Activated CD4-positive, alpha-beta memory T cell treated with anti-CD3 and anti-CD28 coated beads, Interleukin-2, amount 10 ng/mL, durations not matched to agents 7 days and 5 days (primary cell): ENCODE measurements at regions of chr15 and their contacts with region 1.

Region 1: DNA sequence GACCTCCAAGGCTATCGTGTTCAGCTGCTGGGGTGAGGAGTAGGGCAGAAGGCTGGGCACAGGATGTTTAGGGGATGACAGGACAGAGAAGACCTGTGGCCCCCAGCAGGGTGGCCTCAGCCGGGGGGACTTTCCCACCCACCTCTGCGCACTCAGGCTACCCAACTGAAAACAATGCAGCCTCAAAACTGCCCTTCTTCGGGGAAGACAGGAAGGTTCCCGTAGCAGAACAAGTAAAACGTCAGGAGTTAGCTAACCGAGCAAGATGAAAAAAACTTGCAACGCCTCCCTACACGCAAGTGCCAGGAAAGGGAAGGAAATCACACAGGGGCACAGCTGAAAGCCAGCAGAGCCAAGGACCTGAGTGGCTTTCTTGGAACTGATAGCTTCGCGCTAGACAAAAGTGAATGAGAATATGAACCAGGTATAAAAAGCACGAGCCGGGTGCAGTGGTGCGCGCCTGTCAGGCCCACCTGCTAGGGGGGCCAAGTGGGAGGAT is 38.4 kb upstream of the FURIN start:
- DNase-seq: peak; percentile 81
- H3K4me3 Mint-ChIP-seq: peak overlapping the region; percentile 58
- H3K27ac Mint-ChIP-seq: peak overlapping the region; percentile 99
- H3K4me1 Mint-ChIP-seq: peaks cover 78% of the 10 kb centered on the region
- H3K27me3 Mint-ChIP-seq: no peaks in the 10 kb centered on the region

Region 2: DNA sequence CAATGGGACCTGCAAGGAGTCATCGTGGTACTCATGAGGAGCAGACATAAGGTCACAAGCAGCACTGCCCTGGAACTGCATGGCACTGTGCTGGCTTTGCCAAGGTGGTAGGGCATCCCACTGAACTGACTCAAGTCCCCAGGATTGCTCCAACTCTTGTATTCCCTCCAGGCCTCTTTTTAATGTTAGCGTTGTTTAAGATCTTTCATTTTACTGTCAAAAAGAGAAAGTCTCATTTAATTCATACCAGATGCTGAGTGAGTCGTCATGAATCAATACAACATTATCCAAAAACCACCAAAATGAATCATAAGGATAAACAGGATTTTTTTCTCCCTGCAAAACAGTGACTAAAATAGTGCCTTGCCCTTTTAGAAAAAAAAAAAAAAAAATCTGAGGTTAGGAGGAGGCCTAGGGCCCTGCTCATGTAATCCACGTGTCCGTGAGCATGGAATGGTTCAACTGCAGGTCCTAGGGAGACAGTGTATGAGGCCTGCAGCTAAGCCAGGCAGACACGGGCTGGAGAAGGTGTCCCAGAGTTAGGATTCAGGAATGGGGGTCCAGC is 149.5 kb before region 1 on chr15:
- CTCF ChIA-PET with region 1: no interaction called
- POLR2A ChIA-PET with region 1: no interaction called
- DNase-seq: no peak
- H3K4me3 Mint-ChIP-seq: no peak overlapping the region
- H3K27ac Mint-ChIP-seq: no peak overlapping the region
- H3K4me1 Mint-ChIP-seq: peaks cover 47% of the 10 kb centered on the region
- H3K27me3 Mint-ChIP-seq: peaks cover under 1% of the 10 kb centered on the region

Region 3: DNA sequence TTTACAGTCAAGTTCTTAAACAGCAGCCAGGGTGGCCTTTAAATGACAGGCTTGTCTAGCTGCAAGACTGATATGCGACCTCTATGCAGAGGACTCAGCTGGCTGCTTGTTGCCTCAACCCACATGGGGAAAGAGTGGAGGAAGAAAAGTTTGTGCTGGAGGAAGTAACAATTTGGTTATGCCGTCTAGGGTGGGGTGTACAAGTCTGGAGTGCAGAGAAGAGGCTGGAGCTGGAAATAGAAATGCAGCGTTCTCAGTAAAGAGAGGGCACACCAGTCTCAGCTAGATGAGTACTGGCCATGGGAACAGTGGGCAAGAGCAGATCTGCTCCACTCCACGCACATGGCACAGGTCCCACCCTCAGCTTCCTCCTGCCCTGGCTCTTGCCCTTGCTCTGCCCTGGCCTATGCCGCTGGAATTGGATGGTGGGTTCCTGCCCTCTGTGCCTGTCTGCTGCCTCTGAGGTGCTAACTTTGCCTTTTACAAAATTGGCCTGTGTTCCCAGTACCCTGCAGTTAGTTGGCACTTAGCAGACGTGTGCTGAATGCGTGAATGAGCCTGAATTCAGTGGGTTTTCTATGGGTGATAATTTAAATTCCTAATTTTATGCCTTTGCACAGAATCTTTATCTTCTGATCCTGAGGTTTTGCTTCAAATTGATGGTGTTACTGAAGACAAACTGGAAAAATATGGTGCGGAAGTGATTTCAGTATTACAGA is 21.3 kb before region 1 on chr15:
- CTCF ChIA-PET with region 1: no interaction called
- POLR2A ChIA-PET with region 1: interaction called, 143 read pairs
- DNase-seq: no peak
- H3K4me3 Mint-ChIP-seq: no peak overlapping the region
- H3K27ac Mint-ChIP-seq: peak overlapping the region; percentile 86
- H3K4me1 Mint-ChIP-seq: peaks cover 69% of the 10 kb centered on the region
- H3K27me3 Mint-ChIP-seq: no peaks in the 10 kb centered on the region

Region 4: DNA sequence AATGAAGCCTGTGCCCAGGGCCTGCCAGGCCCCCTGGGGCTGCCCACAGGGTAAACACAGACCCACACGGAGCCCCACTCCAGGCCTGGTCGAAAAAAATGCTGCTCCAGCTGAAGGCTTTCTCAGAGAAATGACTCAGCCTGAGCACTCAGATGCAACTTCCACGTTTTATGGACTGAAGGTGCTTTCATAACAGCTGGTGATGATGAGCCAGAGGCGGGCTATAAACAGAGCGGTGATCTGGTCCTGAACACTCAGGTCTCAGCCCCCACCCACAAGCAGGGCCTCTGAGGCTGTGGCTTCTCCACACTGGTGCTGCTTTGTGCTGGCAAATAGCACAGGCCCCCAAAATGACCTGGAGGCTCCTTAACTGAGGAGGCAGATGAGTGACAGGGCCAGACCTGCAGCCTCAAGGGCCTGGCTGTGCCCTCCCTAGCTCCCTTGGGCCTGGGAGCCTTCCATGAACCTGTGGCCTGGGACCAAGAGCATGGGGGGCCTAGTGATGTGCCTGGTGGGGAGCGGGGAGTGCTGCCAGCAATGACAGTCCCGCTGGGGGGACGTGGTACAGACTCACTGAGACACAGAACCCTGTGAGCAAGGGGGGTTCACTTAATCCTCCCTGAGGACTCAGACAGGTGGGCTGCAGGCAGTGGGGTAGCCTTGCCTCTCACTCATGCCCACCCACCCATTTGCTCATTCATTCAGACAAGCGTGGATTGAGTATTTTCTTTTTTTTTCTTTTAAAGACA is 15.4 kb after region 1 on chr15:
- CTCF ChIA-PET with region 1: interaction called, 3 read pairs
- POLR2A ChIA-PET with region 1: interaction called, 89 read pairs
- DNase-seq: peak; percentile 63
- H3K4me3 Mint-ChIP-seq: no peak overlapping the region
- H3K27ac Mint-ChIP-seq: peak overlapping the region; percentile 85
- H3K4me1 Mint-ChIP-seq: peaks cover 62% of the 10 kb centered on the region
- H3K27me3 Mint-ChIP-seq: no peaks in the 10 kb centered on the region

Region 5: GRCh38 chr15:90851114-90851513 is 21.1 kb after region 1 on chr15:
- CTCF ChIA-PET with region 1: interaction called, 7 read pairs
- POLR2A ChIA-PET with region 1: interaction called, 89 read pairs
- DNase-seq: peak; percentile 80
- H3K4me3 Mint-ChIP-seq: peak overlapping the region; percentile 63
- H3K27ac Mint-ChIP-seq: peak overlapping the region; percentile 91
- H3K4me1 Mint-ChIP-seq: peaks cover 77% of the 10 kb centered on the region
- H3K27me3 Mint-ChIP-seq: no peaks in the 10 kb centered on the region

Region 6: DNA sequence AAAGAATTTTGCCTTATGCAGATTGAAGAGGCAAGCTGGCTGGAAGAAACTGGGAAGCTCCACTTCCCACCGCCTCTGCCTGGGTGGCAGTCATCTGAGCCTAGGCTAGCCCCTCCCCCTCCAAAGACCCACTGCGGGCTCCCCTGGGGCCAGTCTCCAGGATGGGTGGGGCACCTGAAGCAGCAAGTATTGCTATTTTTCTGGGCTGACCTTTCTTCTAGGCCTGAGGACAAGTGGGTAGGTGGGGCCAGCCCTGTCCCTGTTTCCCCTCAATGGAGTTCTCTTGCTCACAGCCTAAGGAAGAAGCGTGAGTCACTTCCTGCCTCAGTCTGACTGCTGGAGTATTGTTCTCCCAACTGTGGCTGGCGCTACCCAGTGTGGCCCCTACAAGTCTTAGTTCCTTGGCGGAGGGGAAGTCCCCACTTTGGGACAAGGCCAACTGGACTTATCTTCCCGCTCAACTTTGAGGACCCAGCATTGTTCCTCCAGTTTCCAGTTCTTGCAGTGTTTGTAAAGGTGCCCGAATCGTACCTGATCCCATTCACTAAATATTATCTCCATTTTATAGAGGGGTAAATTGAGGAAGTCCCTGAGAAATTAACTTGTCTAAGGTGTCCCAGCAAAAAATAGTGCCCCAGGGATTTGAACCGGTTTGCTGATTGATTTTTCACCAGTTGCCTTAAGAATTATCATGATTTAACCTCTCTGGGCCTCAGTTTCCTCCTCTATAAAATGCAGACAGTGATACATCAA is 39.8 kb after region 1 on chr15:
- CTCF ChIA-PET with region 1: interaction called, 3 read pairs
- POLR2A ChIA-PET with region 1: interaction called, 34 read pairs
- DNase-seq: peak; percentile 63
- H3K4me3 Mint-ChIP-seq: peak overlapping the region; percentile 85
- H3K27ac Mint-ChIP-seq: peak overlapping the region; percentile 91
- H3K4me1 Mint-ChIP-seq: peaks cover 59% of the 10 kb centered on the region
- H3K27me3 Mint-ChIP-seq: no peaks in the 10 kb centered on the region

Region 7: DNA sequence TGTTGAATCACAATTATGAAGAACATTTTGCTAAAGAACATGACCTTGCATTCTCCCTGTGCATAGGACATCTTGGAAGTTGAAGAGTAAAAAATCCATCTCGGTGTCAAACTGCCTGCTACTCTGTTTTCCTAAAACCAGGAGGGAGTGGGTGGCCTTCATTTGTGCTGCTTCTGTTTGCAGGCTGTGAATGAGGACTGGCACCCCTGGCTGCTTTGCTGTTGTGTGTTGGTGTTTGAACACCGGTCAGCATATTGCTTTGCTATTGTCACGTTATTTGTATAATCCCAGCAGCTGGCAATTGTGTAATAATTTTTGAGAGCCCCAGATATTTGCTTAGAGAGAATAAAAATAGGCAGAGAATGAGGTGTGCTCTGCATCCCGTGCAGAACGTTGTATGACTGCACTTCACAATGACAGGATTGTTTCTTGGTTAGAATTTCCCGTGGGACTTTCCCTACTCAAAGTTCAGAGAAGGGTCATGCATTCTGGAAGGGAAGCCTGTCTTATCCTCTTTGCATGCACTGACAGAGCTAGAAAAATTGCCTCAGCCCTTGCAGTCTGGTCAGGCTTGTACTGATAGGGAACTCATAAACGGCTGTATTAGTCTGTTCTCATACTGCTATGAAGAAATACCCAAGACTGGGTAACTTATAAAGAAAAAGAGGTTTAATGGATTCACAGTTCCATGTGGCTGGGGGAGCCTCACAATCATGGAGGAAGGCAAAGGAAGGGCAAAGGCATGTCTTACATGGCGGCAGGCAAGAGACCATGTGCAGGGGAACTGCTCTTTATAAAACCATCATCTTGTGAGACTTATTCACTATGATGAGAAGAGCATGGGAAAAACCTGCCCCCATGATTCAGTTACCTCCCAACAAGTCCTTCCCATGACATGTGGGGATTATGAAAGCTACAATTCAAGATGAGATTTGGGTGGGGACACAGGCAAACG is 286.4 kb after region 1 on chr15:
- CTCF ChIA-PET with region 1: no interaction called
- POLR2A ChIA-PET with region 1: no interaction called
- DNase-seq: no peak
- H3K4me3 Mint-ChIP-seq: no peak overlapping the region
- H3K27ac Mint-ChIP-seq: no peak overlapping the region
- H3K4me1 Mint-ChIP-seq: no peaks in the 10 kb centered on the region
- H3K27me3 Mint-ChIP-seq: peaks cover 30% of the 10 kb centered on the region